Caco-2 (cell line): ENCODE measurements at regions of chr11 and their contacts with region 1.

Region 1: DNA sequence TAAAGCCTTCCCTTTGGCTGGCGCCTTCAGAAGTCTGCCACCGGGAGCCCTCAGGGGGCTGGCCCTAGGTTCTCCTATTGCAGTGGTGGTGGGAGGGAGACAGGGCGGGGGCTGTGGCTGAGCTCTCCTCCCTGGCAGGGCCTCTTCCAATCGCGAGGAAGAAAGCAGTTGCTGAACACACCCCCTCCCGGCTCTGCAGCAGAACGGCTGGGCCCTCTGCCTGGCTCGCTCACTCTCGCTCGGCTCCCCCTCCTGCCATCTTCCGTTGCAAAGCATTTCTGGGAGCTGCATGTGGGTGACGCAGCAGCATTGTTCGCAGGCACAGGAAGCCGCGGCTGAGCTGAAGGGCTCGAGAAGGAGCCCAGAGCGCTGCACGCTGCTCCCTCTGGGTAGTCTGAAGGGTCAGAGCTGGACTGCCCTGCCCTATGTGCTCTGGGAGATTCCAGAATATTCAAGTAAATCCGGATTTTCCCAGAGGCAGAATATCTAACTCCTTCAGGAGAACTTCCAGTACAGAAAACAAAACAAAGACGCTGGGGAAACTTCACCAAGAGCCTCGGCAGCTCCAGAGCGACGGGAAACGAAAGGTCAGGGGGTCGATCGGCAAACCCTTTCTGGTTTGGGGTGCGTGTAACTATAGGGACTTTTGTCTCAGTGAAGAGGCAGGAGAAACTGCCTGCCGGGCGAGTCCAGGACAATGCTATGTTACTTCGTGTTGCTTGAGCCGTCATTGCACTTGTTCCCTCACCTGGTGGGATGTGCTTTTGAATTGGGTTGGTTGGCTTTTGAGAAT is 26.3 kb upstream of the GRK2 start:
- DNase-seq: peak; percentile 100
- H3K4me3 ChIP-seq: peak overlapping the region; percentile 46
- H3K4me3 Mint-ChIP-seq: peak overlapping the region; percentile 96
- H3K27ac Mint-ChIP-seq: peak overlapping the region; percentile 98
- H3K4me1 ChIP-seq: peaks cover 30% of the 10 kb centered on the region
- H3K4me1 Mint-ChIP-seq: peaks cover 34% of the 10 kb centered on the region
- H3K27me3 ChIP-seq: no peaks in the 10 kb centered on the region
- H3K27me3 Mint-ChIP-seq: no peaks in the 10 kb centered on the region
- CTCF ChIP-seq: no peak

Region 2: DNA sequence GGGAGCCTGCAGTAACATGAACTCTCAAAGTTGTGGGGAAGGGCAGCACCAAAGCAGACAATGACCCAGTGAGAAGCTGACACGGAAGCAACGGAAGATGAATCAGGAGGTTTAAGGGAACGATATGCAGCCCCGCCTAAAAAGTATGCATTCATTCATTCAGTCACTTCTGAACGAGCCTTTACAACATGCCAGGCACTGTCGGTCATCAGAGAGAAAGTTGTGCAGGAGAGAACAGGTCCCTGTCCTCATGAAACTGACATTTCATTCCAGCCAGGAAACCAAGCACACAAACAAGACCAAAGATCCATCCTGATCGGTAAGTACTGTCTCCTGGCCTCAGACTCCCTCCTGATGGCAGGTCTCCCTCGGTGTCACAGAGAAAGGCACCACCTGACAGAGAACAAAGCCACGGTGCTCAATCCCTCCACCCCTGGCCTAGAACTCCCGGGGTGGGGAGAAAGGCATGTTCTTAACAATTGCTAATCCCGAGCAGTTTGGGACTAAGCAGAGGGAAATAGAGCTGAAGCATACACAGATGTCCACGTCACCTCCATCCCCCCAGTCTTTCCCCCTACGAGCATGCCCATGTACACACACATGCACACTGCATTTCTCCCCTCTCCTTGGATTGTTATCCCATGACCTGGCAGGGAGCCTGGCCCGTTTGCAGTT is 333.8 kb before region 1 on chr11:
- CTCF ChIA-PET with region 1: no interaction called
- POLR2A ChIA-PET with region 1: no interaction called
- intact Hi-C with region 1: no loop called
- DNase-seq: no peak
- H3K4me3 ChIP-seq: no peak overlapping the region
- H3K4me3 Mint-ChIP-seq: no peak overlapping the region
- H3K27ac Mint-ChIP-seq: no peak overlapping the region
- H3K4me1 ChIP-seq: peaks cover 13% of the 10 kb centered on the region
- H3K4me1 Mint-ChIP-seq: peaks cover 7% of the 10 kb centered on the region
- H3K27me3 ChIP-seq: no peaks in the 10 kb centered on the region
- H3K27me3 Mint-ChIP-seq: no peaks in the 10 kb centered on the region
- CTCF ChIP-seq: no peak

Region 3: DNA sequence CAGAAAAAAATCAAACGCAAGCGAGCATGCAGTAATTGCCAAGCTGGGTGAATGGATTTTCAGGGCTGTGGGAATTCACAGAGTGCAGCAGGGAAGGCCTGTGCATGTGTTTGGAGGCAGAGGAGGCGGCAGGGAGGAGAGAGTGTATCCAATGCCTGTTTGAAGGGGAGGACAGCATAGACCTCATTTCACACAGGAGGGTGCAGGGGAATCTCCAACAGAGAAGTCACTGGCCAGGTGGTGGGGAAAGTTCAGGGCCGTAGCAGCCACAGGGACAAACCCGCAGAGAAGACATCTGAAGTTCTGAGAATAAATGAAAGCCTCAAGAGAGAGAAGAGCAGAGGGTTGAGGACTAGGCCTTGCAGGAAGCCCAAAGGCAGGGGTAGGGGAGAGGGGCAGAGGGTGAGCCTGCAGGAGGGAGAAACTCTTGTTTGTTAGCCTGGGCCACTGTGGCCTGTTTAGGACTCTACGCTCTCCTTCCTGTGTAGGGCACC is 140.1 kb before region 1 on chr11:
- CTCF ChIA-PET with region 1: interaction called, 15 read pairs
- POLR2A ChIA-PET with region 1: no interaction called
- intact Hi-C with region 1: no loop called
- DNase-seq: no peak
- H3K4me3 ChIP-seq: no peak overlapping the region
- H3K4me3 Mint-ChIP-seq: no peak overlapping the region
- H3K27ac Mint-ChIP-seq: no peak overlapping the region
- H3K4me1 ChIP-seq: no peaks in the 10 kb centered on the region; the same call in 1 of the 2 replicates
- H3K4me1 Mint-ChIP-seq: no peaks in the 10 kb centered on the region
- H3K27me3 ChIP-seq: no peaks in the 10 kb centered on the region
- H3K27me3 Mint-ChIP-seq: no peaks in the 10 kb centered on the region
- CTCF ChIP-seq: no peak

Region 4: GRCh38 chr11:67265633-67266423 is 25.8 kb after region 1 on chr11:
- CTCF ChIA-PET with region 1: interaction called, 20 read pairs
- POLR2A ChIA-PET with region 1: interaction called, 12 read pairs
- intact Hi-C with region 1: loop called (anchors 2 kb)
- DNase-seq: peak; percentile 80 to 96
- H3K4me3 ChIP-seq: peak overlapping the region; percentile 16
- H3K4me3 Mint-ChIP-seq: peak overlapping the region; percentile 100
- H3K27ac Mint-ChIP-seq: peak overlapping the region; percentile 95
- H3K4me1 ChIP-seq: peaks cover 31% of the 10 kb centered on the region
- H3K4me1 Mint-ChIP-seq: peaks cover 28% of the 10 kb centered on the region
- H3K27me3 ChIP-seq: no peaks in the 10 kb centered on the region
- H3K27me3 Mint-ChIP-seq: no peaks in the 10 kb centered on the region
- CTCF ChIP-seq: peak; percentile 78 to 84

Region 5: DNA sequence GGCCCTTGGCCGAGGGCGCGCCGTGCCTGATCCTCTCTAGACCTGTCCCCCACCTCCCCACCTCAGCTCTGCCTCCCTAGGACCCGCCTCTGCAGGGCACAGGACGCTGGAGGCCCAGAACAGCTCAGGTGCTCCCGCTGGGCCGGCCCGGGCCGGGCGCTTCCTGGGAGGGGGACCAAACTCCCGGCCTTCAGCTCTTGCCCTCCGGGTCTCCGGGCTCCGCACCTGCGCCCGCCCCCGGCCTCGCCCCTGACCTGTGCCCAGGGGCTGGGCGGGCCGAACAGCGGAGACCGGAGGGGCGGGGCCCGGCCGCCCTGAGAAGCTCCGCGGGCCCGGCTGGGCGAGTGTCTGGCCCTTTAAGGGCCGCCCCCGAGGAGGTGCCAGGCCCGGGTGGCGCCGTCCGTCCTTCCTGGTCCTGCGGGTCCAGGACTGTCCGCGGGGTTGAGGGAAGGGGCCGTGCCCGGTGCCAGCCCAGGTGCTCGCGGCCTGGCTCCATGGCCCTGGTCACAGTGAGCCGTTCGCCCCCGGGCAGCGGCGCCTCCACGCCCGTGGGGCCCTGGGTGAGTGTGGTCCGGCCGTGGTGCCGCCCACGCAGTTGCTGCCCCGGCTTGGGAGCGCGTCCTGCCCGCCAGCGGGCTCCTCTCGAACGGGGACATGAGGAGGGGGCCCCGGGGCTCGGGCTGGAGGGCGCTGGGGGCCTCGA is 63.3 kb after region 1 on chr11 and contains the start of gene SSH3:
- CTCF ChIA-PET with region 1: interaction called, 7 read pairs
- POLR2A ChIA-PET with region 1: interaction called, 16 read pairs
- intact Hi-C with region 1: no loop called
- DNase-seq: peak; percentile 88 to 95
- H3K4me3 ChIP-seq: peak within 1 kb of the TSS; percentile 93
- H3K4me3 Mint-ChIP-seq: peak within 1 kb of the TSS; percentile 80
- H3K27ac Mint-ChIP-seq: peak within 1 kb of the TSS; percentile 86
- H3K4me1 ChIP-seq: peaks cover 23% of the 10 kb centered on the region
- H3K4me1 Mint-ChIP-seq: peaks cover 6% of the 10 kb centered on the region
- H3K27me3 ChIP-seq: no peaks in the 10 kb centered on the region
- H3K27me3 Mint-ChIP-seq: no peaks in the 10 kb centered on the region
- CTCF ChIP-seq: no peak
- total RNA-seq, gene SSH3: 81.2 and 89.6 TPM in 2 replicates